ENCODE measurements at regions of chr6 and their contacts with region 1.

Region 1: DNA sequence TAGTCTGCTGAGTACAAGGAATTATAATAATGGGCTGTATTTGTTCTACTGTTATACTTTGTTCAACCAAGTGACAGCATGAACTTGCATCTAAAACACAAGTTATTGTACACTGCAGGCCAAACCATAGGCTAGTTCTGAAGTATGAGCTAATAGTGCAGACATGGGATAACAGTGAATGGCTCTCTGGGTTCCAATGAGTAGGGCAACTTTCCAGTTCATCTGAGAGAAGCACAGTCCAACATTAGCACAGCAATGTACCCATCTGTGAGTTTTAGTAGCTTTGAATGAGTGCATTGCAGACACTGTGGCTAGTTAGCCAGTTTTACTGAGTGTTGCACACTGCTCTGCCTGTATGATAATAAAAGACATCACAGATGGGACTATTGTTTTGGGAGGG is 56.5 kb upstream of the FUT9 start:
- DNase-seq: no peak
- H3K4me3 ChIP-seq: no peak overlapping the region
- H3K4me3 Mint-ChIP-seq: no peak overlapping the region
- H3K27ac ChIP-seq: no peak overlapping the region
- H3K27ac Mint-ChIP-seq: no peak overlapping the region
- H3K4me1 ChIP-seq: no peaks in the 10 kb centered on the region
- H3K4me1 Mint-ChIP-seq: no peaks in the 10 kb centered on the region
- H3K27me3 ChIP-seq: no peaks in the 10 kb centered on the region
- H3K27me3 Mint-ChIP-seq: no peaks in the 10 kb centered on the region

Region 2: DNA sequence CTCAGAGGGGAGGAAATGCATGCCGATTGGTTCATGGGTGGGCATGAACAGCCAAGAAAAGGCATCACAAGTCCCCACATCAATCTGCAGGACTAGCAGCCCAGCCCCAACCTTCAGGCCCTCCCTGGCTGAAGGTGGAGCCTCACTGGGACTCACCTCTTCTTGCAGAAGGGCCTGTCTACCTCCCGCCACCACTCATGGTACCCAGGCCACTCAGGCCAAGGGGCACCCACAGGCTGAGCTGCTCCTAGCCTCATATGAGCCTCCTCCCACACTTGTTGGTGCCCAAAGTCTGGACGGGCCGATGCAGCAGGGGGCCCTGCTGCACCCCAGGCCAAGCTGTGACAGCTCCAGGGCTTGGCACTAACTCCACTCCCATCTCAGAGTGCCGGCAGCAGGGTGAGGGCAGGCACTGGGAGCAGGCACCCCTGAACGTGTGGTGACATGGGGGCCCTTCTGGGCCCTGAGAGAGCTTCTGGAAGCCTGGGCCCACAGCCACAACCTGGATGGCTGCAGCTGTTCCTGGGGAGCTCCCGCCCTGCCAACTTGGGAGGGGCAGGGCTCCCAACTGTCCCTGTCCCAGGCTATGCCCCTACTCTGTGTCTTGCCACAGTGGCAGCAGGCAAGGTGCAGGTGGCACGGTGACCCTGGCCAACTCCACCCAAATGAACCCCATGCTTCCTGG is 42.8 kb after region 1 on chr6:
- CTCF ChIA-PET with region 1: no interaction called
- POLR2A ChIA-PET with region 1: no interaction called
- intact Hi-C with region 1: no loop called
- DNase-seq: no peak
- H3K4me3 ChIP-seq: no peak overlapping the region
- H3K4me3 Mint-ChIP-seq: no peak overlapping the region
- H3K27ac ChIP-seq: no peak overlapping the region
- H3K27ac Mint-ChIP-seq: no peak overlapping the region
- H3K4me1 ChIP-seq: no peaks in the 10 kb centered on the region
- H3K4me1 Mint-ChIP-seq: no peaks in the 10 kb centered on the region
- H3K27me3 ChIP-seq: no peaks in the 10 kb centered on the region
- H3K27me3 Mint-ChIP-seq: no peaks in the 10 kb centered on the region

Region 3: GRCh38 chr6:96626759-96627364 is 667.6 kb after region 1 on chr6:
- CTCF ChIA-PET with region 1: no interaction called
- POLR2A ChIA-PET with region 1: no interaction called
- intact Hi-C with region 1: no loop called
- DNase-seq: peak in 4 of 5 donors; percentile 7 to 24 (median 17)
- H3K4me3 ChIP-seq: no peak overlapping the region
- H3K4me3 Mint-ChIP-seq: no peak overlapping the region
- H3K27ac ChIP-seq: no peak overlapping the region
- H3K27ac Mint-ChIP-seq: no peak overlapping the region
- H3K4me1 ChIP-seq: no peaks in the 10 kb centered on the region
- H3K4me1 Mint-ChIP-seq: no peaks in the 10 kb centered on the region
- H3K27me3 ChIP-seq: no peaks in the 10 kb centered on the region
- H3K27me3 Mint-ChIP-seq: peaks cover 3 to 6% of the 10 kb centered on the region in 2 donors

Region 4: GRCh38 chr6:97645757-97646156 is 1686.5 kb after region 1 on chr6:
- CTCF ChIA-PET with region 1: no interaction called
- POLR2A ChIA-PET with region 1: no interaction called
- intact Hi-C with region 1: loop called (anchors 5 kb)
- DNase-seq: no peak
- H3K4me3 ChIP-seq: no peak overlapping the region
- H3K4me3 Mint-ChIP-seq: no peak overlapping the region
- H3K27ac ChIP-seq: no peak overlapping the region
- H3K27ac Mint-ChIP-seq: no peak overlapping the region
- H3K4me1 ChIP-seq: no peaks in the 10 kb centered on the region
- H3K4me1 Mint-ChIP-seq: no peaks in the 10 kb centered on the region
- H3K27me3 ChIP-seq: no peaks in the 10 kb centered on the region
- H3K27me3 Mint-ChIP-seq: no peaks in the 10 kb centered on the region